GM13977 (cell line): ENCODE measurements at regions of chr4 and their contacts with region 1.

Region 1: DNA sequence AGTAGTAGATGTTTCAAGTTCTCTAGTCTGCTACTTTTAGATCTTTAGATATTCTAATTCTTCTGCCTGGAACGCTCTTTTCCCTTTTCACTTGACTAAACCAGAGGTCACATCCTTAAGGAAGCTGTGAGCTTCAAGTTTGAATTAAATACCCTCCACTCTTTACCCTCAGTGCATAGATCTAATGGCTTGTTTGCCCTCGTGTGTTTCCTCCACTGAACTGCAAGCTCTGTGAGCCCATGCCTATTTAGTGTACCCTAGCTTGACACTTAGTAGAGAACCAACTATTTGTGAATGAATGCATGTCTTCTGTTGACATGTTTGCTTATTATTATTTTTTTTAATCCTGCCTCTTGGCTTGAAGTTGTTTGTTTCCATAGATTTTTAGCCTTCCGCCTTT is 138.3 kb downstream of the PDE5A start:
- DNase-seq: no peak
- CTCF ChIP-seq: peak; percentile 44

Region 2: DNA sequence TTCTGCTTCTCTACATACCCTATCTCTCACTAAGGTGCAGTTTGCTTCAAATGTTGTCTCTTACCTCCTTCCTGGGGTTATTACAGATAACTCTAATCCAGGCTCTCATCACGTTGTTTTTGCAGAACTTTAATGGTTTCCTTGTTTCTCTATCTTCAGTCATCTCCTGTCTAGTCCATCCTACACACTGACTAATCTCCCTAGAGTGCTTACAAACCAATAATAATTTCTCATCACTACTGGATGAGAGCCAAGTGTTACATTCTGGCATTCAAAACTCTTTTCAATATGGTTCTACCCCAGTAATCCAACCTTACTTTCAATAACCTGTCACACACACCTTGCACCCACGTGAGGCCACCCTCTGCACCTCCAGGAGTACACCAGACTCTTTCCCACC is 515.6 kb before region 1 on chr4:
- in situ Hi-C with region 1: loop called (anchors 10 kb)
- DNase-seq: no peak
- CTCF ChIP-seq: no peak

Region 3: GRCh38 chr4:118985170-118986000 is 504.9 kb before region 1 on chr4:
- in situ Hi-C with region 1: no loop called
- DNase-seq: no peak
- CTCF ChIP-seq: no peak

Region 4: GRCh38 chr4:119289313-119289712 is 201.0 kb before region 1 on chr4:
- in situ Hi-C with region 1: no loop called
- DNase-seq: no peak
- CTCF ChIP-seq: no peak

Region 5: GRCh38 chr4:119300101-119300978 is 190.0 kb before region 1 on chr4:
- in situ Hi-C with region 1: loop called (anchors 10 kb)
- DNase-seq: peak; percentile 86
- CTCF ChIP-seq: no peak